SK-N-SH (cell line): ENCODE measurements at regions of chr15 and their contacts with region 1.

Region 1: DNA sequence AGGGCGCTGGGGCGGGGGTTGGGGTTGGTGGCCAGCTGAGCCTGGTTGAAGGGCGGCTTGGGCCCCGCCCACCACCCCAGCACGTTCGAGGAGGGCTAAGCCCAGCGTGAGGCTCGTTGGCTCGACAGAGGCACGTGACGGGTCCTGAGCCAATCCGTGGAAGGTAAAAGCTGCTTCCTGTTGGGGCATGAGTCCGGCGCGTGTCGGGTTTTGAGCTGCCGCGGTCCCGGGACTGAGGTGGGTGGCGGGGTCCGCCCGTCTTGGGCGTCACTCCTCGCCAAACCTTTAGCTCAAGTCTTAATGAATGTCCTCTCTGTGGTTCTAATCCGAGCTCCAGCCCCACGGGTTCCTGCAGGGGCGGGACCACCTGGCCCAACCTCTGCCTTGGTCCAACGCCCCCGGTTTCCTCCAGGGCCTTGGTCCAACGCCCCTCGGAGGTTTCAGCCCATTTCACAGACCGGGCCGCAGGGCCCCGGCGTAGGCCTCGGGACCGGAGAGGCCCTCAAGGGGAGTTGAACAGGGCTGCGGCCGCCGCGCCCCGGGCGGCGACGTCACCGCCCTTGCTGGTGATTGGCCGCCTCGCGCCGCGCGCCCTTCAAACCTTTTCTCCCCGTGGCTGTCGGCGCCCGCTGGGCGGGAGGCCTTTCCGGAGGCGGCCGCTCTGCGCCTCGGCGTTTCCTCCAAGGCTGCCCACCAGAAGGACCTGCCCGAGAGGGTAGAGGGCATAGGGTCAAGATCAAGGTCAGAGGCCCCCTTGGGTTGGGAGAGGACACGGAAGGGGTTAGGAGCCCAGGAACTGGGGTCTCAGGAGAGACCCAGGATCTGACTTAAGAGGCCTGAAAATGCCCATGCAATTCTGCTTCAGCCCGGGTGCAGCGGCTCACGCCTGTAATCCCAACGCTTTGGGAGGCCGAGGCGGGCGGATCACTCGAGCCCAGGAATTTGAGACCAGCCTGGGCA is at the start of gene RCCD1:
- DNase-seq: peak; percentile 98
- H3K4me3 ChIP-seq: peak within 1 kb of the TSS; percentile 76 to 81
- H3K27ac ChIP-seq: peak within 1 kb of the TSS; percentile 85 to 88
- H3K4me1 ChIP-seq: peaks cover 0 to 23% of the 10 kb centered on the region in 2 experiments; a peak in 1 of 4 replicates
- H3K27me3 ChIP-seq: no peaks in the 10 kb centered on the region
- CTCF ChIP-seq: no peak
- EP300 ChIP-seq: no peak
- RAD21 ChIP-seq: no peak
- polyA plus RNA-seq, gene RCCD1: 19.5 and 21.2 TPM in 2 replicates

Region 2: GRCh38 chr15:90982135-90982534 is 27.1 kb after region 1 on chr15:
- CTCF ChIA-PET with region 1: interaction called, 74 read pairs
- POLR2A ChIA-PET with region 1: no interaction called
- DNase-seq: no peak
- H3K4me3 ChIP-seq: no peak overlapping the region
- H3K27ac ChIP-seq: no peak overlapping the region
- H3K4me1 ChIP-seq: no peaks in the 10 kb centered on the region; a peak in 2 of 4 replicates
- H3K27me3 ChIP-seq: no peaks in the 10 kb centered on the region
- CTCF ChIP-seq: no peak
- EP300 ChIP-seq: no peak
- RAD21 ChIP-seq: no peak

Region 3: DNA sequence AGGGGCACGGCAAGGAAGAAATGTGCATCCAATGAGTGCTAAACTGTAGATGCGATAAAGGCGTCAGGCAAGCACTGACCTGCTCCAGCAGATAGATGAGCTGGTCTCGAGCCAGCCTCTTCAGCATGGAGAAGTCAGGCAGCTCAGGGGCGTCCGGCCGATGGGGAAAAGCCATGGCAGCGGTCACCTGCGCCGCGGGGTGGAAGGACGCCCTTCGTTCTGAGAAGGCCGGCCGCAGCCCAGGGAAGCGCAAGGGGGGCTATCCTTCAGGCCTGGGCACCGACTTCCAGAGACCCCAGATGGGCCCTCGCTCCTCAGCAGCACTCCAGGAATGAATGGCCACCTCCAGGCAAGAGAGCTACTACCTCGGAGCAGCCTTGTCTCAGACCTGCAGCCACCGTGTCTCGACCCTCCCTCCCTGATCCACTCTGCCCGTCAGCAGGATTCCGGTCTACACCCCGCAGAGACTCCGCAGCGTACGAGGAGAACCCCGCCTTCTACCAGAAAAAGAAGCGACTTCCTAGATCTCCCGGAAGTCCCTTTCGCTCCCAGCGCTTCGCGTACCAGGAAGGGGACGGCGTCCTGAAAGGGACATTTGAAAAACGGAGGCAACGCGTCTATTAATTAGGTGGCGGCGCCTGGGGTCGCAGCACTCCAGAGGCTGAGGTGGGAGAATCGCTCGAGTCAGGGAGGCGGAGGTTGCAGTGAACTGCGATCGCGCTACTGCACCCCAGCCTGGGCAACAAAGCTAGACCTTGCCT is 67.3 kb after region 1 on chr15 and contains the start of gene VPS33B:
- CTCF ChIA-PET with region 1: interaction called, 22 read pairs
- POLR2A ChIA-PET with region 1: interaction called, 7 read pairs
- DNase-seq: peak; percentile 85
- H3K4me3 ChIP-seq: peak within 1 kb of the TSS; percentile 88 to 97
- H3K27ac ChIP-seq: peak within 1 kb of the TSS; percentile 67 to 83
- H3K4me1 ChIP-seq: peaks cover 4 to 10% of the 10 kb centered on the region in 2 experiments; a peak in 3 of 4 replicates
- H3K27me3 ChIP-seq: no peaks in the 10 kb centered on the region
- CTCF ChIP-seq: no peak
- EP300 ChIP-seq: no peak
- RAD21 ChIP-seq: no peak
- polyA plus RNA-seq, gene VPS33B: 16.6 and 25.3 TPM in 2 replicates

Region 4: DNA sequence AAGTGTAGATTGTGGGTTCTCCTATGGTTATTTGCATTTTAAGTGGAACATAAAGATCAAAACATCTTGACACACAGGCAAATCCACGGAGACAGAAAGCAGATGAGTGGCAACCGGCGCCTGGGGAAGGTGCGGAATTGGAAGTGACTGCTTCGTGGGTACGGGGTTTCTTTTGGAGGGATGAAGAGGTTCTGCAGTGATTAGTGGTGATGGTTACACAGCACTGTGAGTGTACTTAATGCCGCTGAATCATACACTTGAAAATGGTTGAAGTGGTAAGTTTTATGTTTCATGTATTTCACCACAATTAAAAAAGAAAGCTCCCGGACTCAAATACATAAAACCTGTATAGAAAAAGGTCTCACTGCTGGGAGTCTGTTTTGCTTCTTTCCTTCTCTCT is 85.9 kb after region 1 on chr15:
- CTCF ChIA-PET with region 1: interaction called, 12 read pairs
- POLR2A ChIA-PET with region 1: interaction called, 3 read pairs
- DNase-seq: no peak
- H3K4me3 ChIP-seq: no peak overlapping the region
- H3K27ac ChIP-seq: no peak overlapping the region
- H3K4me1 ChIP-seq: no peaks in the 10 kb centered on the region
- H3K27me3 ChIP-seq: no peaks in the 10 kb centered on the region
- CTCF ChIP-seq: no peak
- EP300 ChIP-seq: no peak
- RAD21 ChIP-seq: no peak

Region 5: DNA sequence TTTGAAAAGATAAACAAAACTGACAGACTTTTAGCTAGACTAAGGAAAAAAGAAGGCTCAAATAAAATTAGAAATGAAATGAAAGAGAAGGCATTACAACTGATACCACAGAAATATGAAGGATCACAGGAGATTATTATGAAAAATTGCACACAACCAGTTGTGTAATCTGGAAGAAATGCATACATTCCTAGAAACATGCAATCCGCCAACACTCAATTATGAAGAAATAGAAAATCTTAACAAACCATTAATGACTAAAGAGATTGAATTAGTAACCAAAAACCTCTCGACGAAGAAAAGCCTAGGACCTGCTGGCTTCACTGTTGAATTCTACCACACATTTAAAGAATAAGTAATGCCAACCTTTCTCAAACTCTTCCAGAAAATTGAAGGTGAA is 294.6 kb after region 1 on chr15:
- CTCF ChIA-PET with region 1: interaction called, 11 read pairs
- POLR2A ChIA-PET with region 1: no interaction called
- DNase-seq: no peak
- H3K4me3 ChIP-seq: no peak overlapping the region
- H3K27ac ChIP-seq: no peak overlapping the region
- H3K4me1 ChIP-seq: peaks cover 0 to 2% of the 10 kb centered on the region in 2 experiments; a peak in 1 of 4 replicates
- H3K27me3 ChIP-seq: no peaks in the 10 kb centered on the region
- CTCF ChIP-seq: no peak
- EP300 ChIP-seq: no peak
- RAD21 ChIP-seq: no peak